ENCODE measurements at regions of chr17 and their contacts with region 1.

Region 1: DNA sequence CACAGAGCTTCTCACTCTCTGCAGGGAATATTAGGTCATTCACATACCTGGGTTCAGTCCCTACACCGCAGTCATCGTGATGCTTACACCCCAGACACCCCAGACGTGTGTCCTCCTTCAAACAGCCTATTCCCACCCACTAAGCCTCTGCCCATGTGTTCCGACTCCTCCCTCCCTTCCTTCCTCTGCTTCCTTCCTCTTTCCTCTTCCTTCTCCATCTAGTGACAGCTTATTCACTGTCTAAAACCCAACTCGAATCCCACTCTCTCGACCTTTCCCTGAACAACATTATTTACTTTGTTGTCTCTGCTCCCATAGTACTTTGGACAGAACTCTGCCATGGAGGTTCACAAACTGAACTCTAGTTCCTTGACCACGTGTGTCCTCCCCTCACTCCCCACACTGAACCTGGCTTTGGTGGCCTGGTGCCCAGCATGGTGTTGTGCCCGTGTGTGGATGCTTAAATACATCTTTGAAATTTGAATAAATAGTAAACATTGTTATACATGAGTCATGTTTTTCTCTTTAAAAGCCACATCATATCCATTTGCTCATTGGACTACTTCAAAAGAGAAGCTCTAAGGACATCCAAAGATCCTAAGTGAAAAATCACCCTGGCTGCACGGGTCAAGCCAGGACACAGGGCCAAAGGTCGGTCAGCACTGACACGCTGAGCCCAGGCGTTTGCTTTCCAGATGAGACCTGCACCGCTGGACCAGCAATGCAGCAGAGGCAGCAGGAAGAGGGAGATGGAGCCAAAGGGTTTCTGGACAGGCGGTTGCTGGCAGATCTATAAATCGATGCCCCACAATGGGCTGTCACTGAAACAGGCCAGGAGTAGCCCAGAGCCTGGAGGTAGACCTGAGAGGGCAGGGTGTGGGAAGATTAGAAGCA is 14.1 kb upstream of the G6PC1 start:
- DNase-seq: no peak
- H3K27ac ChIP-seq: no peak overlapping the region
- CTCF ChIP-seq: no peak

Region 2: DNA sequence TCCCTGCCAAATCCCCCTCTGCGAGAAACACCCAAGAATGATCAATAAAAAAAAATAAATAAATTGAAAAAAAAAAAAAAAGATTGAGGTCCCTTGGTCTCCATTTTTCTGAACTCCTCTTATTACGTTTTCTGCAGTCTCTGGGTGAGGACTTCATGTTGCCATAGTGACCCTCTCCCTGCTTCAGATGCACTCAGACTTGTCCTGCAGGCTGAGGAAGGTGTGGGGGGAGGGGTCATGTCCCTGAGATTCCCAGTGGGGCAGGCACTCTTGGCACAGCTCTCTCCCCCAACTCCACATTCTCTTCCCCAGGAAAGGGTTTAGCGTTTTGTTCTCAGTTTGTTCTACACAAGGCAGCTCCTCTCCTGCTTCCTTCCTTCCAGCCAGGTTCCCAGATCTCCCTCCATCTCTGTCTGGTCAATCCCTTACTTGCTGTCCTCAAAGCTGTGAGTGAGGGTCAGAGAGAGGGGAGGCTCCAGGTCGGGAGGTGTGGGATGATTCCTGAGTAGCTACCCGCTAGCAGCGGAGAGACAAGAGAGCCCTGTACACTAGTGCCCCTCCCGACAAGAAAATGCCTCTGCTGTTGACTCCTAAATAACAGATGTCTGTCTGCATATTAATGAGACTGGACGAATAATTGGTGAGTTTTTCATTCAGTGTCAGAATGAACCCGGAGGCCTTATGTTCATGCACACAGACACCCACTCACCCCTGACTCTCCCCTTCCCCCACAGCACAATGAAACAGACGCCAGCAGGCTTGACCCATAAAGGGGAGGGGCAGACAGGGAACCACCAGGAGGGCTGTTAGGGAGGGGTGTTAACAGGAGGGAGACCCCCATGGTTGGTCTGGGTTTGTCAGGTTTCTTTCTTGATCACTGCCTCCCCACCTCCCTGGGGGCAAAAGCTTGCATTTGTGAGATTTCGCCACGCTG is 147.7 kb after region 1 on chr17:
- CTCF ChIA-PET with region 1: no interaction called
- POLR2A ChIA-PET with region 1: interaction called, 12 read pairs
- DNase-seq: no peak
- H3K27ac ChIP-seq: no peak overlapping the region
- CTCF ChIP-seq: no peak

Region 3: GRCh38 chr17:43823350-43824084 is 937.0 kb after region 1 on chr17:
- CTCF ChIA-PET with region 1: no interaction called
- POLR2A ChIA-PET with region 1: no interaction called
- DNase-seq: no peak
- H3K27ac ChIP-seq: peak overlapping the region; percentile 27
- CTCF ChIP-seq: no peak

Measured in RWPE1 (cell line).